Caco-2 (cell line): ENCODE measurements at regions of chr12 and their contacts with region 1.

Region 1: DNA sequence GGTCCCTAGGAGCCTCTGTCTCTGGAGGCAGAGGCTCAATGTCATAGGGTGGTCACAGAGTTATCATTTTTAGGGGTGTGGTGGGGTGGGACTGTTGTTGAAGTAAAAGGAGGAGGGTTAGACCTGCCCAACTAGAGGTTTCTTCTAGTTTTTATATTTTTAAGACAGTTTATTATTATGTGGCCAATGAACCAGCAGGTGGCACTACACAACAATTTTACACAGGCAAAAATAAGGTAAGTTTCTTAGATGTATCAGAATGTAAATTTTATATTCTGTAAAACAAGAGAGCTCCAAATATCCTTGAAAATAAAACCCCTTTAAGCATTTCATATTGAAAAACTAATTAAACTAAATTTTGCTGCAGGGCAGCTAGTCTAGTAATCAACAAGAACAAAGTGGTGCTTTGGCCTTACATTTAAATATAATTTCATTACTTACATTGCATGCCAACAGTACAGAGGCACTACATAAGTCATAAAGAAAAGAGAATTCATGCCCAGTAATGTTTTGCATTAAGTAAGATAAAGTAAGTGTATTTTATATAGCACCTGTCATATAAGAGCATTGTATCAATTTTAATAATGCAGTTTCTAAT is 22.2 kb upstream of the OVCH1 start:
- DNase-seq: peak in 1 of 2 experiments; percentile 43
- H3K4me3 ChIP-seq: no peak overlapping the region
- H3K4me3 Mint-ChIP-seq: no peak overlapping the region
- H3K27ac Mint-ChIP-seq: no peak overlapping the region
- H3K4me1 ChIP-seq: no peaks in the 10 kb centered on the region
- H3K4me1 Mint-ChIP-seq: no peaks in the 10 kb centered on the region
- H3K27me3 ChIP-seq: no peaks in the 10 kb centered on the region
- H3K27me3 Mint-ChIP-seq: peaks cover 12% of the 10 kb centered on the region
- CTCF ChIP-seq: peak; percentile 64 to 70

Region 2: DNA sequence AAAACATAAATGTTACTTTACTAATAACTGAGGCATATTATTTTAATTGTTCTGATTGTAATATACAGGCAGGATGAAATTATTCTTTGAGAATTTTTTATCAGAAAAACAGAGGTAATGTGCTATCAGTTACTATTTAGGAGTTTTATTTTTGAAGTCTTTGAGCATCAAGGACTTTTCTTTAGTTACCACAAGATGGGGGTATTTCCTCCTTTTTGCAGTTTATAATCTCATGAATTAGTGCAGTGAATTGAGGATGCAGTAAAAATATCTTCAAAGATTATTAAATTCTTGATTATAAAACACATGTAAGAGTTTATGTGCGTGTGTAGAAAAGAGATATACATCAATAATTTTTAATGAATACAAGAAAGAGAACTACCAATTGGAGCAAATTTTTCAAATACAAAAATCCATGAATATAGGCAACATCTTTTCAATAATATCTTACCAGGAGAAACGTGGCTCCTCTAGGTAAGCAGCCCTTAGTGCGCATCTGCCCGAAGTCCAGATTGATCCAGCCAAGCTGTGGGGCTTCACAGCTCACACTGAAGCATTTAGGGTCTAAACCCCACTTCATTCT is 210.3 kb before region 1 on chr12:
- CTCF ChIA-PET with region 1: interaction called, 3 read pairs
- POLR2A ChIA-PET with region 1: no interaction called
- intact Hi-C with region 1: loop called (anchors 1 kb)
- DNase-seq: no peak
- H3K4me3 ChIP-seq: no peak overlapping the region
- H3K4me3 Mint-ChIP-seq: no peak overlapping the region
- H3K27ac Mint-ChIP-seq: no peak overlapping the region
- H3K4me1 ChIP-seq: peaks cover 3% of the 10 kb centered on the region
- H3K4me1 Mint-ChIP-seq: no peaks in the 10 kb centered on the region
- H3K27me3 ChIP-seq: no peaks in the 10 kb centered on the region
- H3K27me3 Mint-ChIP-seq: no peaks in the 10 kb centered on the region
- CTCF ChIP-seq: peak; percentile 44 to 46

Region 3: GRCh38 chr12:29552324-29552927 is 32.7 kb after region 1 on chr12:
- CTCF ChIA-PET with region 1: no interaction called
- POLR2A ChIA-PET with region 1: no interaction called
- intact Hi-C with region 1: no loop called
- DNase-seq: peak; percentile 68 to 77
- H3K4me3 ChIP-seq: no peak overlapping the region
- H3K4me3 Mint-ChIP-seq: no peak overlapping the region
- H3K27ac Mint-ChIP-seq: no peak overlapping the region
- H3K4me1 ChIP-seq: no peaks in the 10 kb centered on the region
- H3K4me1 Mint-ChIP-seq: no peaks in the 10 kb centered on the region
- H3K27me3 ChIP-seq: no peaks in the 10 kb centered on the region
- H3K27me3 Mint-ChIP-seq: peaks cover 10% of the 10 kb centered on the region
- CTCF ChIP-seq: peak; percentile 88 to 92

Region 4: DNA sequence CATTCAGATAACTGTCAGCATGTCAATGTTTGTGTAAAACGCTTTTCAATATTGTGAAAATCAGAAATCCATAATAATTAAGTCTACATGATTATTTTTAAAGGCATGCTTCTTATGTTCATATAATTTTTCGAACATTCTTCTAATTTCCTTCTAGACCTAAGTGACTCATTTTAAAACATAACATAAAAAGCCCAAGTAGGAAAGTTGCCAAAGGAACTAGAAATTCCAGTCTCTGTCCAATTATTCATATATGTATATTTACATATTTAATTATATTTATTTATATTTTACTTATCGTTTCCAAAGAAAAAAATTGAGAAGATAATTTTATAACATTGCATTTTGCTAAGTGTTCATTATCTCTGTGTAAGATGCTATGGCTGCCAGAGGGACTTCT is 153.7 kb after region 1 on chr12:
- CTCF ChIA-PET with region 1: no interaction called
- POLR2A ChIA-PET with region 1: no interaction called
- intact Hi-C with region 1: no loop called
- DNase-seq: no peak
- H3K4me3 ChIP-seq: no peak overlapping the region
- H3K4me3 Mint-ChIP-seq: no peak overlapping the region
- H3K27ac Mint-ChIP-seq: no peak overlapping the region
- H3K4me1 ChIP-seq: no peaks in the 10 kb centered on the region
- H3K4me1 Mint-ChIP-seq: no peaks in the 10 kb centered on the region
- H3K27me3 ChIP-seq: no peaks in the 10 kb centered on the region
- H3K27me3 Mint-ChIP-seq: no peaks in the 10 kb centered on the region
- CTCF ChIP-seq: no peak

Region 5: DNA sequence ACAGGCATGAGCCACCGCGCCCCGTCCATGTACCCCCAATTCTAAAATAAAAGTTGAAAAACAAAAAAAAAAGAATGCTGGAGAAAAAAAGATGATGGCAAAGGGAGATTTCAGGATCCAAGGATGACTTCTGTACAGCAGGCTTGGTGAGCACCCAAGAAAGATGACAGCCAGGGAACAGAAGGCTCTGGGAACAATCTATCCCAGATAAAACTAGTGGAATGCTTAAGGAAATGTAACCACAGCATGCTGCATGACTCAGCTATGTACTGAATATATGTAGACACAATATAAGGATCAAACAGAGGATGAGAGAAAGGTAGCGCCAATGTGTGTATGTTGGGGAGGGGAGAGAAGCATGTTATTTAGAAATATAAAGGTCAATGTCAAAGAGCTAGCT is 387.8 kb after region 1 on chr12:
- CTCF ChIA-PET with region 1: no interaction called
- POLR2A ChIA-PET with region 1: no interaction called
- intact Hi-C with region 1: no loop called
- DNase-seq: no peak
- H3K4me3 ChIP-seq: no peak overlapping the region
- H3K4me3 Mint-ChIP-seq: no peak overlapping the region
- H3K27ac Mint-ChIP-seq: no peak overlapping the region
- H3K4me1 ChIP-seq: no peaks in the 10 kb centered on the region
- H3K4me1 Mint-ChIP-seq: no peaks in the 10 kb centered on the region
- H3K27me3 ChIP-seq: no peaks in the 10 kb centered on the region
- H3K27me3 Mint-ChIP-seq: no peaks in the 10 kb centered on the region
- CTCF ChIP-seq: no peak

Region 6: DNA sequence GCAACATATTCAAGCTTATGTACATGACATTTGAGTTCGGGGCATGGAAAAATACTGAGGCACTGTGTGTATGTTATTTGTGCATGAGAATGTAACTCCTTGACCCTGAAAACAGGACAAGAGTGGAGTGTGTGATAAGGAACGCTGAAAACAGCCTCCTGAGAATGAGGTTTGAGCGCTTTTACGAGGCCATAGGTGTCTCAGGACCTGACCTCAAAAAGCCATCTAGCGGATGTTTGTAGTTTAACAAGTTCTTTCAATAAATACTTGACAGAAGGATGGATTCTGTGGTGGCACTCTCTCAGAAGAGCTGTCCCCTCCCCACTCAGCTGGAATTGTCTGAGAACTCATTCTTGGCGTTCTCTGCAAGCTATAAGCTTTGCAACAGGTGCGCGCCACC is 614.5 kb after region 1 on chr12:
- CTCF ChIA-PET with region 1: no interaction called
- POLR2A ChIA-PET with region 1: no interaction called
- intact Hi-C with region 1: loop called (anchors 1 kb)
- DNase-seq: peak in 1 of 2 experiments; percentile 50
- H3K4me3 ChIP-seq: no peak overlapping the region
- H3K4me3 Mint-ChIP-seq: no peak overlapping the region
- H3K27ac Mint-ChIP-seq: no peak overlapping the region
- H3K4me1 ChIP-seq: 0 out of 2 replicates have a peak, but pooled peaks cover 3% of the 10 kb centered on the region
- H3K4me1 Mint-ChIP-seq: no peaks in the 10 kb centered on the region
- H3K27me3 ChIP-seq: no peaks in the 10 kb centered on the region
- H3K27me3 Mint-ChIP-seq: no peaks in the 10 kb centered on the region
- CTCF ChIP-seq: peak; percentile 48 to 74

Region 7: DNA sequence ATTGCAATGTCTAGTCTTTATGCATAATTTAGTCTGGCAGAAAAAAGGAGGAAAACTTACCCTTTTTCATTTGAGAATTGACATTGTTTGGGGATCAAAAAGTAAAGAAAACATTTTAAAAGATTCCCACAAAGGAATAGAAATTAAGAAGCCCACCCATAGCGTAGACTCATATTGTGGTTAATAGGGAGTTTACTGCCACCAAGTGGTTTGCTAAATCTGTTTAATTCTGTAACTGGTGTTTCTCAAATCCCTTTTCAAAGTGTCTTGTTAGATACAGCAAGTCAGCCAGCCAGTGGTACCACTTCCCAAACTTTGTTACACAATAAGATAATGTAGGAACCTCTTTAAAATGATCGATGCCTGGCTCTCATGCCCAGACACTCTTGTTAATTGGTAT is 995.7 kb after region 1 on chr12:
- CTCF ChIA-PET with region 1: no interaction called
- POLR2A ChIA-PET with region 1: no interaction called
- intact Hi-C with region 1: loop called (anchors 5 kb)
- DNase-seq: no peak
- H3K4me3 ChIP-seq: no peak overlapping the region
- H3K4me3 Mint-ChIP-seq: no peak overlapping the region
- H3K27ac Mint-ChIP-seq: no peak overlapping the region
- H3K4me1 ChIP-seq: no peaks in the 10 kb centered on the region
- H3K4me1 Mint-ChIP-seq: no peaks in the 10 kb centered on the region
- H3K27me3 ChIP-seq: no peaks in the 10 kb centered on the region
- H3K27me3 Mint-ChIP-seq: no peaks in the 10 kb centered on the region
- CTCF ChIP-seq: peak in 1 of 2 experiments; percentile 19

Region 8: DNA sequence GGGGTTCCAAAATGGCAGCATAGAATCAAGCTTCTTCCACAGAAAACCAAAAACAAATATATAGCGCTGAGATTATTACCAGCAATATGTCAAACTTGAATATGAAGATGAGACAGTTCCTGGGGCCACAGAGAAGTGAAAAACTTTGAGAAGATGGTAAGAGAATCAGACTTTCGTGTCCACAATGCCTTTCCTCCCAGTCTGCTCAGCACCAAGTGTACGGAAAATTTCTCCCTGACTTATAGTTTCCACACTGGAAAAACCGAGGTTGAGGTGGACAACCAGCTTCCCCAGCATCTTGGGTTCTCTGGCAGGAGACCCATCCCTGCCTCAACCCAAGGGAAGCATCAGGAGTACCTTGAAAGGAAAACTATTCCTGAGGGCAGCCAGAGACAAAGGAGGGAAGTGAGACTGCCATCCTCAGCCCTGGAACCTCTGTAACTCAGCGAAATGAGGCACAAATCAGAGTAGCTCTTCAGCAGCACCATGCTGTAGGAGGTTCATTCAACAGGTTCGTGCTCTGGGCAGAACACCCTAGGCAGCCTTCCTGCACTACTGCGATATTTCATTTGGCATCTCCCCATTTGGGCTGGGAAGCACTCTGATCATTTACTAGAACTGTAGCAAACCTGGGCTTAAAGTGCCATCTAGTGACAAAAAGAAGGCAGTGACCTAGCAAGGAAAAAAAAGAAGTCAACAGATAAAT is 1287.5 kb after region 1 on chr12:
- CTCF ChIA-PET with region 1: interaction called, 3 read pairs
- POLR2A ChIA-PET with region 1: no interaction called
- intact Hi-C with region 1: loop called (anchors 1 kb)
- DNase-seq: peak in 1 of 2 experiments; percentile 74
- H3K4me3 ChIP-seq: no peak overlapping the region
- H3K4me3 Mint-ChIP-seq: no peak overlapping the region
- H3K27ac Mint-ChIP-seq: no peak overlapping the region
- H3K4me1 ChIP-seq: no peaks in the 10 kb centered on the region
- H3K4me1 Mint-ChIP-seq: no peaks in the 10 kb centered on the region
- H3K27me3 ChIP-seq: no peaks in the 10 kb centered on the region
- H3K27me3 Mint-ChIP-seq: peaks cover 6% of the 10 kb centered on the region
- CTCF ChIP-seq: peak; percentile 80 to 94